Activated T-helper 1 cell treated with anti-CD3 and anti-CD28 coated beads, Interleukin-12 subunit alpha, Interleukin-12 subunit beta, Interleukin-2, Interleukin-4 antibody, amounts not matched to agents 30 ng/mL and 10 ng/mL and 1 ng/mL, durations not matched to agents 14 hours and 24 hours and 36 hours (primary cell): ENCODE measurements at regions of chr1 and their contacts with region 1.

Region 1: GRCh38 chr1:110338886-110339406 is at the start of gene RBM15:
- DNase-seq: peak; percentile 98
- H3K4me3 Mint-ChIP-seq: no peak within 1 kb of the TSS
- H3K27ac Mint-ChIP-seq: peak within 1 kb of the TSS; percentile 98
- H3K4me1 Mint-ChIP-seq: peaks cover 54% of the 10 kb centered on the region
- H3K27me3 Mint-ChIP-seq: no peaks in the 10 kb centered on the region
- total RNA-seq, gene RBM15: 58.5 and 59.0 TPM in 2 replicates

Region 2: GRCh38 chr1:109426278-109427170 is 912.4 kb before region 1 on chr1 and contains the start of gene PSMA5:
- intact Hi-C with region 1: loop called (anchors 2 kb)
- DNase-seq: peak; percentile 94
- H3K4me3 Mint-ChIP-seq: peak within 1 kb of the TSS; percentile 97
- H3K27ac Mint-ChIP-seq: peak within 1 kb of the TSS; percentile 96
- H3K4me1 Mint-ChIP-seq: peaks cover 44% of the 10 kb centered on the region
- H3K27me3 Mint-ChIP-seq: peaks cover under 1% of the 10 kb centered on the region
- total RNA-seq, gene PSMA5: 241 and 283 TPM in 2 replicates

Region 3: DNA sequence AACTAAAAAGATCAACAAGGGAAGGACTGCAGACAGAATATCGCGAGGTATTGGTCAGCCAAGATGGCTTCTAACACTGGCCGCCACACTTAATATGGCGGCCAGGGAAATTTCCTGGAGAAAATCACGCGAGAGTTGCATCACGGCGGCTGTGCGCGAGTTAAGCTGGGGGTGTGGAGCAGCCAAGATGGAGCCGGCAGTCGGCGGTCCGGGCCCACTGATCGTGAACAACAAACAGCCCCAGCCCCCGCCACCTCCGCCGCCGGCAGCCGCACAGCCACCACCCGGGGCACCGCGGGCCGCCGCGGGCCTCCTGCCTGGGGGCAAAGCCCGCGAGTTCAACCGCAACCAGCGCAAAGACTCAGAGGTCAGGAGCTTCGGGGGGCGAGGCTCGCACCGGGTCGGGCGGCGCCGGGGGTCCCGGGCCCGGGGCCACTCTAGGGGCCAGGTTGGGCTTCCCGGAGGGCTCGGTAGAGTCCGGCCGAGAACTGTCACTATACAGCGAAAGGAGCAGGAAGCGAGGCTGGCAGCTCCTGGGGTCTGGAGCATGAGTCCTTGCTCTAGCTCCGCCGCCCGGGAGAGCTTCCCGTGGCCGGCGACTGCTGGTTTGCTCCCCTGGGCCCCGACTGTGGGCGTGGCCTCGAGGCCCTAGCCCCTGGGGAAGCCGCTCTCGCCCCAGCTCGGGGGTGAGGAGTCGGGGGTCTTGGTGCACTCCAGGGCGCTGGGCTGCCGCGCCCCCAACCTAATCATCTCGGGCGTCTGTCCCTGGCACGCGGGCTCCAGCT is 304.3 kb before region 1 on chr1 and contains the start of gene STRIP1:
- intact Hi-C with region 1: loop called (anchors 1 kb)
- DNase-seq: peak; percentile 91
- H3K4me3 Mint-ChIP-seq: peak within 1 kb of the TSS; percentile 95
- H3K27ac Mint-ChIP-seq: peak within 1 kb of the TSS; percentile 85
- H3K4me1 Mint-ChIP-seq: peaks cover 54% of the 10 kb centered on the region
- H3K27me3 Mint-ChIP-seq: no peaks in the 10 kb centered on the region
- total RNA-seq, gene STRIP1: 41.5 and 43.7 TPM in 2 replicates

Region 4: GRCh38 chr1:110356405-110356804 is 17.5 kb after region 1 on chr1:
- intact Hi-C with region 1: loop called (anchors 2 kb)
- DNase-seq: no peak
- H3K4me3 Mint-ChIP-seq: no peak overlapping the region
- H3K27ac Mint-ChIP-seq: peak overlapping the region; percentile 69
- H3K4me1 Mint-ChIP-seq: peaks cover 29% of the 10 kb centered on the region
- H3K27me3 Mint-ChIP-seq: no peaks in the 10 kb centered on the region

Region 5: GRCh38 chr1:110370827-110371226 is 31.9 kb after region 1 on chr1:
- intact Hi-C with region 1: no loop called
- DNase-seq: no peak
- H3K4me3 Mint-ChIP-seq: no peak overlapping the region
- H3K27ac Mint-ChIP-seq: peak overlapping the region; percentile 32
- H3K4me1 Mint-ChIP-seq: peaks cover 12% of the 10 kb centered on the region
- H3K27me3 Mint-ChIP-seq: no peaks in the 10 kb centered on the region

Region 6: DNA sequence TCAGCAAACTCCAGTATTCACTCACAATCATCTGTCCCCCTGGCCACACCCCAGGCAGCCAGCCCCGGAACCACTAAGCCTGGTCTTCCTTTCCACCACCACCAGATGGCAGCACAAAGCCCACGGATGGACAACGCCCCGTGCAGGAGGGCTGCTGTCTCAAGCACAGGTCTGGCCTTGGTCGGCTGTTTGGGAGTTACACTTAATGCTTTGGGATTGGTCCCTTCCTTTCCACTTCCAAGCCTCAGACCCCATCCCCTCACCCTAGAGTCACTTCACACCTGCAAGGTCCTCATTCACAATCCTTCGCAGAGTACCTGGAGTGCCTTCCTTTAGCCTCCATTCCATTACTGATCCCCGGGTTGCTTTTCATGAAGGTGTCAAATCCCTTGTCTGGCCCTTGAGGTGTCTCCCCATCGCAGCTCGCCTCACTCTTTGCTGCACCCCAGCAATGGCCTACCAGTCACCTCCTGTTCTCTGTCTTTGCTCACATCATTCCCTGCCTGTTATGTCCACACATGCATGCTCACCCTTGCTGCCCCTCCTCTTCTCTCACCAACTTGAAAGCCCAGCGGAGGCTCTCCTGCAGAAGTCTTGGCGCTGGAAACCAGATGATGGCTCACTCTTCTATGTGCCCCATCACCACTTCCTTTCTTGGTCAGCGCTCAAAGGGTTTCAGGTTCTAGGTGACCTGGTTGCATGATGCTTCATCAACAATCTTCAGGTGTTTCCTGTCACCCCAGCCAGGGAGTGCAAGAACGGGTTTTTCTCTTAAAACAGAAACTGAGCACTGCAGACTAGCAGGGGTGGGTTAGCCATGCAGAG is 292.1 kb after region 1 on chr1:
- intact Hi-C with region 1: loop called (anchors 10 kb)
- DNase-seq: peak; percentile 84
- H3K4me3 Mint-ChIP-seq: no peak overlapping the region
- H3K27ac Mint-ChIP-seq: no peak overlapping the region
- H3K4me1 Mint-ChIP-seq: peaks cover 67% of the 10 kb centered on the region
- H3K27me3 Mint-ChIP-seq: no peaks in the 10 kb centered on the region

Region 7: GRCh38 chr1:110963691-110964399 is 624.9 kb after region 1 on chr1 and contains the start of gene LRIF1:
- intact Hi-C with region 1: loop called (anchors 2 kb)
- DNase-seq: peak; percentile 100
- H3K4me3 Mint-ChIP-seq: peak within 1 kb of the TSS; percentile 90
- H3K27ac Mint-ChIP-seq: peak within 1 kb of the TSS; percentile 96
- H3K4me1 Mint-ChIP-seq: peaks cover 43% of the 10 kb centered on the region
- H3K27me3 Mint-ChIP-seq: peaks cover 2% of the 10 kb centered on the region
- total RNA-seq, gene LRIF1: 13.8 and 14.8 TPM in 2 replicates